ENCODE measurements at regions of chr4 and their contacts with region 1.

Region 1: GRCh38 chr4:40247350-40247749 is 50.5 kb downstream of the RHOH start:
- DNase-seq: peak; percentile 80
- ATAC-seq: peak; percentile 55
- H3K4me3 Mint-ChIP-seq: peak overlapping the region; percentile 77
- H3K27ac Mint-ChIP-seq: peak overlapping the region; percentile 95
- H3K4me1 Mint-ChIP-seq: peaks cover 75% of the 10 kb centered on the region
- H3K27me3 Mint-ChIP-seq: no peaks in the 10 kb centered on the region
- CTCF ChIP-seq: no peak

Region 2: DNA sequence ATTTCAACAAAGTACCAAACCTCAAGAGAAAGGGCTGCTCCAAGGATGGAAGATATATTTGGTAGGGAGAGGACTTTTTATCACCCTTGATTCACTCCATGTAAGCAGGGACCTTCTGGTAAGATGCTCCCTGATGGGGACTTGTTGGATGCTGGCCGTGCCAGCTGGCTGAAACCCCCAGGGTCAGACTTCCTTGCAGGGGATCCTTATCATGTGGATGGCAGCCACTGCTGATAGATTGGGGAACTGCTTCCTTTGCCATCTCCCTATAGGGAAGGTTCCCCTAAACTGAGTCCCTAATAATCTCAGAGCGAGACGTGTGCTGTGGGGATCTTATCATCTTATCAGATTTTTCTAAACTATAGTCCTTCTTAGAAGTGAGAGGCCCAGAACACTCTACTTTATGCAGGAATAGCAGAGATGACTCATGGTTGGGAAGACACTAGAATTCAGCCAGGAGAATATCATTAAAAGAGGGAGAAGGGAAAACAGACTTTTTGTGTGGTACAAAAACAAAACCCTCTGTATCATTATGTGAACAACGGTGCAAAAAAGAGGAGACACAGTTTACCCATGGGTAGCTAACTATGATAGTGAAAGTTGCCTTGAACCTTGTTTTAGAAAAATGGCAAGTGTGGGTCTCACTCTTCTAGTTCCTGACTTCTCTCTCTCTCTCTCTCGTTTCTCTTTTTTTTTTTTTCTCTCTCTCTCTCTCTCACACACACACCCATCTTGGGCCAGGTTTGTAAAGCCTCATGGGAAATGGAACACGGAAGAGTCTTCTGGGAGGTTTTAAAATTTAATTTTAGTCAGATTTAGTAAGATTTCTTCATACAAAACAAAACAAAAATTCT is 34.4 kb before region 1 on chr4:
- CTCF ChIA-PET with region 1: no interaction called
- POLR2A ChIA-PET with region 1: interaction called, 14 read pairs
- intact Hi-C with region 1: loop called (anchors 2 kb)
- DNase-seq: peak; percentile 4
- ATAC-seq: peak; percentile 24
- H3K4me3 Mint-ChIP-seq: peak overlapping the region; percentile 99
- H3K27ac Mint-ChIP-seq: peak overlapping the region; percentile 96
- H3K4me1 Mint-ChIP-seq: peaks cover 74% of the 10 kb centered on the region
- H3K27me3 Mint-ChIP-seq: no peaks in the 10 kb centered on the region
- CTCF ChIP-seq: no peak

Measured in activated CD8-positive, alpha-beta T cell treated with anti-CD3 and anti-CD28 coated beads for 36 hours (primary cell).